GM12878 (cell line): ENCODE measurements at regions of chr15 and their contacts with region 1.

Region 1: DNA sequence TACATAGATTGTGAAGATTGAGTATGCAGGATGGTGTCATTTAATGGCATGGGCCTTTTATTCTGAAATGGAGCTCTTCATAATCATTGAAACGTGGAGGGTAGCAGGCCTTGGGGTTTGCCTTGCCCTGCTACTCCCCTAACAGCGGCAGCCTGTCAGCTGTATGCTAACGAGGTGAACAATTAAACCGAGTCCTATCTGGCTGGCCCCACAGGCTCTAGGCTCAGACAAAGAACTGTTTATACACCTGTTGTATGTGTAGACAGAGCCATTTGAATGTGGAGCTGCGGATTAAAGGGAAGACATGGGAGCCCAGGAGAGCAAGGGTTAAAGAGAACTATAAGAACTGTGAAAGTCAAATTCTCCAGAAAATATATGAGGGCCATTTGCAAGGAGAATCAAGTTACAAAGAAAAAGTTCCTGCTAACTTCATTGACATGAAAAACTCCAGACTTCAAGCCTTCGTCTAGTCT is 116.7 kb upstream of the CGNL1 start:
- DNase-seq: peak; percentile 13
- ATAC-seq: peak; percentile 94
- H3K4me3 ChIP-seq: no peak overlapping the region
- H3K27ac ChIP-seq: no peak overlapping the region
- H3K4me1 ChIP-seq: no peaks in the 10 kb centered on the region
- H3K27me3 ChIP-seq: no peaks in the 10 kb centered on the region
- CTCF ChIP-seq: no peak
- EP300 ChIP-seq: peak in 1 of 2 experiments; percentile 20; a peak in 1 of 4 replicates
- POLR2A ChIP-seq: no peak
- RAD21 ChIP-seq: no peak

Region 2: DNA sequence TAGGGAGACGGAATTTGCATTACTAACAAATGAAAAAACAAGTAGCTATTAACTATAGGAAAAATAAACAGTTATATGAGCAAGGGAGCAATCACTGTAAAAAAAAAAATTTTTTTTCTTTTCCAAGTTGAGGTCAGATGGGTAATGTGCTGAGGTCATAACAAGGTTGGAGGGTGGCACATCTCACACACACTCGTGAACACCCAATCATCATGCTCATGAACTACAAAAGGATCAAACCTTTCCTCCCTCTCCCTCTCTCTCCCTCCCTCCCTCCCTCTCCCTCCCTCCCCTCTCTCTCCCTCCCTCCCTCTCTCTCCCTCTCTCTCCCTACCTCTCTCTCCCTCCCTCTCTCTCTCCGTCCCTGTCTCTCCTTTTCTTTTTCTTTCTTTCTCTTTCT is 18.8 kb after region 1 on chr15:
- CTCF ChIA-PET with region 1: interaction called, 7 read pairs
- POLR2A ChIA-PET with region 1: interaction called, 3 read pairs
- RAD21 ChIA-PET with region 1: interaction called, 18 read pairs
- SMC1A ChIA-PET with region 1: interaction called, 16 read pairs
- in situ Hi-C with region 1: no loop called
- intact Hi-C with region 1: no loop called
- DNase-seq: no peak
- ATAC-seq: no peak
- H3K4me3 ChIP-seq: no peak overlapping the region
- H3K27ac ChIP-seq: no peak overlapping the region
- H3K4me1 ChIP-seq: peaks cover 19% of the 10 kb centered on the region
- H3K27me3 ChIP-seq: no peaks in the 10 kb centered on the region
- CTCF ChIP-seq: no peak
- EP300 ChIP-seq: no peak
- POLR2A ChIP-seq: no peak
- RAD21 ChIP-seq: no peak

Region 3: GRCh38 chr15:57284535-57284934 is 24.9 kb after region 1 on chr15:
- CTCF ChIA-PET with region 1: interaction called, 7 read pairs
- POLR2A ChIA-PET with region 1: interaction called, 7 read pairs
- RAD21 ChIA-PET with region 1: interaction called, 18 read pairs
- SMC1A ChIA-PET with region 1: interaction called, 17 read pairs
- in situ Hi-C with region 1: no loop called
- intact Hi-C with region 1: no loop called
- DNase-seq: no peak
- ATAC-seq: peak; percentile 75
- H3K4me3 ChIP-seq: peak overlapping the region; percentile 24; the same call in 1 of the 2 replicates
- H3K27ac ChIP-seq: peak overlapping the region; percentile 54
- H3K4me1 ChIP-seq: peaks cover 56% of the 10 kb centered on the region
- H3K27me3 ChIP-seq: no peaks in the 10 kb centered on the region
- CTCF ChIP-seq: no peak
- EP300 ChIP-seq: no peak
- POLR2A ChIP-seq: no peak
- RAD21 ChIP-seq: no peak

Region 4: DNA sequence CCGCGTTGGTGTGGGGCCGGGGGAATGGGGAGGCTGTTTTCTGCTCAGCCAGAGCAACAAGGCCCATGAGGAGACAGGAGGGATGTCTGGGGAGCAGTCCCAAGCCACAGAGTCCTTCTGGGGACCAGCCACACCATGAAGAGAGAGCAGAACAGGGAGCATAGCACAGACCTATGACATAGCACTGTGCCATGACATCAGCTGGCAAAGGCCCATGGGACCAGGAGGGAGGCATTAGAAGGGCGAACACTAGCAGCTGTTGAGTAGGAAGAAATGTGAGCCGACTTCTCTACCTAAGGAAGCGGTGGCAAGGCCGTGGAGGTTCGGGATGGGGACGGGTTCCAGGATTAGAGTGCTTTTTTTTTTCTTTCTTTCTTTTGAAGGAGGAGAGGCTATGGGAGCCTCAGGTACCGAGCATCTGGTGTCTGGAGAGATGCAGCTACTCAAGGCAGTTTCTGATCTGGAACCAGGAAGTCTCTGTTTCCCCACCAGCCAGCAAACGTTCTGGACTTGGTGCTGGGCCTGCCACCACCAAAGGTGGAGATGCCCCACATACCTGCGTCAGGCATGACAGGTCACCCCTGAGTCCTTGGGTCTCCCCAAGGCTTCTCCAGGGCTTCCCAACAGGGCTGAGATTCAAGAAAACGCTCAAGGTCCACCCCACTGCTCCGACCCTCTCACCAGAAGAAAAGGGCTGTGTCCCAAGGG is 39.4 kb after region 1 on chr15:
- CTCF ChIA-PET with region 1: interaction called, 9 read pairs
- POLR2A ChIA-PET with region 1: no interaction called
- RAD21 ChIA-PET with region 1: interaction called, 12 read pairs
- SMC1A ChIA-PET with region 1: interaction called, 16 read pairs
- in situ Hi-C with region 1: no loop called
- intact Hi-C with region 1: loop called (anchors 2 kb)
- DNase-seq: no peak
- ATAC-seq: peak; percentile 5; the same call in 1 of the 3 replicates
- H3K4me3 ChIP-seq: peak overlapping the region; percentile 58; the same call in 1 of the 2 replicates
- H3K27ac ChIP-seq: peak overlapping the region; percentile 77
- H3K4me1 ChIP-seq: peaks cover 36% of the 10 kb centered on the region
- H3K27me3 ChIP-seq: no peaks in the 10 kb centered on the region
- CTCF ChIP-seq: no peak
- EP300 ChIP-seq: no peak
- POLR2A ChIP-seq: no peak
- RAD21 ChIP-seq: no peak

Region 5: DNA sequence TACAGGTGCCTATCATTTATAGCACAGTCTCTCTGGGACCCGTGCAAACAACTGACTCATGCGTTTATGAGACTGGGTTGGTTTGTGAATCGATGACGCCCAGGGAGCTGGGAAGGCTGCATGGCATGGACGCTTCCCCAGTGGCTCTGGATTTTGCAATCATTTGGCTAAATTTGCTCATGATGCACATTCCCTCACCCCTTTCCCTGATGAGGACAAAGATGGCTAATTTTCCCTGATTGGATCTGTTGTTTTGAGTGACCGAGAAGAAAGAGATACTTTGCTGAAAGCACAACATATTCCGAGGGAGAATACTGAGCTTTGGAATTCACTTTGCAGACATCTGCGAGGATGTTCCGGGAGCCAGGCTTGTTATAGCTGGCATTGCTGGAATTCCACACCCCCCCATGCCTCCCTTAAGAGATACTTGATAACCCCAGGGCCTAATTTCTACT is 167.8 kb after region 1 on chr15:
- CTCF ChIA-PET with region 1: no interaction called
- POLR2A ChIA-PET with region 1: no interaction called
- RAD21 ChIA-PET with region 1: no interaction called
- SMC1A ChIA-PET with region 1: no interaction called
- in situ Hi-C with region 1: no loop called
- intact Hi-C with region 1: no loop called
- DNase-seq: no peak
- ATAC-seq: no peak
- H3K4me3 ChIP-seq: no peak overlapping the region
- H3K27ac ChIP-seq: no peak overlapping the region
- H3K4me1 ChIP-seq: no peaks in the 10 kb centered on the region
- H3K27me3 ChIP-seq: no peaks in the 10 kb centered on the region
- CTCF ChIP-seq: no peak
- EP300 ChIP-seq: no peak
- POLR2A ChIP-seq: no peak
- RAD21 ChIP-seq: no peak

Region 6: DNA sequence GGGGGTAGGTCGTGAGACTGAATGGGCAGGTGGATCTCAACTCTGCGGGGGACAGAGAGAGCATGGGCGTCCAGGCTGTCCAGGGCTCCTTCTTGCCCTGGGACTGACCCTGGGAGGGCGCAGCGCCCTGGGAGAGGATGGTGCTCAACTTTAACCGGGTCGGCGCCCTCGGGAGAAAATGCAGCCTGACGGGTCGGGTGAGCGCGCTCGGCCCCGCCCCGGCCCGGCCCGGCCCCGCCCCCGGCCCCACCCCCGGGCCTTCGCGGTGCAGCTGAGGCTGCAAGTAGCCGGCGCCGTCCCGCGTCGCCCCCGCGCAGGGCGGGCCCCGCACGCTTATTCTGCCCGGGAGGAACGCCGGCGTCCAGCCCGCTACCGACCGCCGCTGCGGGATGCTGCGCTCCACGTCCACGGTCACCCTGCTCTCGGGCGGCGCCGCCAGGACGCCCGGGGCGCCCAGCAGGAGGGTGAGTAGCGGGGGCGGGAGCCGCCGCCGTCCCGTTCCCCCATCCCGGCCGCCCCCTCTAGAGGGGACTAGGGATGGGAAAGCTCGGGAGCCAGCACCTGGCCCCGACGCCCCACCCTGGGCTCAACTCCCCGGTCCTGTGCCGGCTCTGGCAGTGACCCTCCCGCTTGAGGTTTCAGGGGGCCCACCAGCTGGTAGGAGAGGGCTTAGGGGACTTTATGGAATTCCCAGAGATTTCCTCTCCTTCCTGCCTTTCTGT is 332.2 kb after region 1 on chr15 and contains the start of gene MYZAP:
- CTCF ChIA-PET with region 1: no interaction called
- POLR2A ChIA-PET with region 1: no interaction called
- RAD21 ChIA-PET with region 1: no interaction called
- SMC1A ChIA-PET with region 1: no interaction called
- in situ Hi-C with region 1: no loop called
- intact Hi-C with region 1: no loop called
- DNase-seq: no peak
- ATAC-seq: peak; percentile 46; the same call in 2 of the 3 replicates
- H3K4me3 ChIP-seq: no peak within 1 kb of the TSS
- H3K27ac ChIP-seq: no peak within 1 kb of the TSS
- H3K4me1 ChIP-seq: no peaks in the 10 kb centered on the region
- H3K27me3 ChIP-seq: peaks cover 5 to 12% of the 10 kb centered on the region in 2 experiments
- CTCF ChIP-seq: no peak
- EP300 ChIP-seq: no peak
- POLR2A ChIP-seq: no peak
- RAD21 ChIP-seq: no peak
- polyA plus RNA-seq, gene MYZAP: not detected